GM12878 (cell line): ENCODE measurements at regions of chr1 and their contacts with region 1.

Region 1: DNA sequence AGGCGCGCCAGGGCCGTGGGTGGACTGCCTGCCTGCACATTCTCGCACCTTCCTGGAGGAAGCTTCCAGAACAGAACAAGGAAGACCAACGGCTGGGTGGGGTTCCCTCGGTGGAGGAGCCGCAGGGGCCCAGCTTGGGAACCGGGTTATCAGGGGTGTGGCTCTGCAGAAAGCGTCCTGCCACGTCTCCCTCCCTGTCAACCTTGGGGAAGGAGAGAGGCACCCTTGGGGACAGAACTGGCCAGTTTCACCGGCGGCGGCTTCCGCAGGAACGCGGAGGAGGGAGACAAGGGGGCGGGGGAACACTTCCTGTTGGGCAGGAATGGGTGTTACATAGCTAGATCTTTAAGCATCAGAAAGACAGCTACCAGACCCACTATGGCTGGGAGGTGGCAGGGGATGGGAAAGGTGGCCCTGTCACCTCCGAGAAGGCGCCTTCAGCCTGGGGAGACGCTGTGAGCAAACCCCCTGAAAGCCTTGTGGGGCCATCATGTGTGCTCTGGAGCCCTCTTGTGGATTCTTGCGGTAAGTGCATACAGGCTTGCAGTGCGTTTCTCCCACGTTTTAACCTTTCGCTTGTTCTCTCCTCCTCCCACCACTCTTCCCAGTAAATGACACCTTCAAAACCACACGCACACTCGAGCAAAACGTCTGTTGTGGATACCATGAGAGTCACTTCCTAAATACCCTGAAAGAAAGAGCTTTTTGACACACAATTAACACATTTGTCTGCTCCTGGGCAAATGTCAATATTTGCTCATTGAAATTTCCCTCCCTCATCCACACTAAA is 3.8 kb upstream of the PLEKHA6 start:
- DNase-seq: peak; percentile 52
- ATAC-seq: peak; percentile 80
- H3K4me3 ChIP-seq: peak overlapping the region; percentile 49
- H3K27ac ChIP-seq: no peak overlapping the region
- H3K4me1 ChIP-seq: peaks cover 11% of the 10 kb centered on the region
- H3K27me3 ChIP-seq: no peaks in the 10 kb centered on the region
- CTCF ChIP-seq: peak; percentile 93 to 97 (median 97); a peak in 5 of 6 replicates
- EP300 ChIP-seq: no peak
- POLR2A ChIP-seq: no peak
- RAD21 ChIP-seq: peak; percentile 88

Region 2: GRCh38 chr1:204162231-204163074 is 201.1 kb before region 1 on chr1:
- CTCF ChIA-PET with region 1: interaction called, 195 read pairs
- POLR2A ChIA-PET with region 1: no interaction called
- RAD21 ChIA-PET with region 1: interaction called, 72 read pairs
- SMC1A ChIA-PET with region 1: interaction called, 97 read pairs
- in situ Hi-C with region 1: loop called (anchors 5 kb)
- intact Hi-C with region 1: loop called (anchors 1 kb)
- DNase-seq: no peak
- ATAC-seq: peak; percentile 99
- H3K4me3 ChIP-seq: no peak overlapping the region
- H3K27ac ChIP-seq: no peak overlapping the region
- H3K4me1 ChIP-seq: no peaks in the 10 kb centered on the region
- H3K27me3 ChIP-seq: no peaks in the 10 kb centered on the region; a peak in 1 of 4 replicates
- CTCF ChIP-seq: peak; percentile 94 to 99 (median 99)
- EP300 ChIP-seq: no peak
- POLR2A ChIP-seq: no peak
- RAD21 ChIP-seq: peak; percentile 84

Region 3: GRCh38 chr1:204213668-204214662 is 149.6 kb before region 1 on chr1 and contains the start of gene GOLT1A:
- CTCF ChIA-PET with region 1: interaction called, 30 read pairs
- POLR2A ChIA-PET with region 1: no interaction called
- RAD21 ChIA-PET with region 1: interaction called, 26 read pairs
- SMC1A ChIA-PET with region 1: interaction called, 28 read pairs
- in situ Hi-C with region 1: no loop called
- intact Hi-C with region 1: loop called (anchors 5 kb)
- DNase-seq: peak; percentile 28
- ATAC-seq: peak; percentile 84
- H3K4me3 ChIP-seq: no peak within 1 kb of the TSS
- H3K27ac ChIP-seq: no peak within 1 kb of the TSS
- H3K4me1 ChIP-seq: no peaks in the 10 kb centered on the region
- H3K27me3 ChIP-seq: peaks cover 0 to 2% of the 10 kb centered on the region in 2 experiments; a peak in 1 of 4 replicates
- CTCF ChIP-seq: peak; percentile 22 to 26 (median 25); a peak in 4 of 6 replicates
- EP300 ChIP-seq: 0 out of 4 replicates have a peak, but pooled peaks of 1 of the 2 experiments have one; percentile 21
- POLR2A ChIP-seq: no peak
- RAD21 ChIP-seq: peak; percentile 25; the same call in 1 of the 2 replicates
- polyA plus RNA-seq, gene GOLT1A: 0.09 TPM in 1 of 2 experiments, not detected in the other

Region 4: GRCh38 chr1:204301186-204301936 is 62.2 kb before region 1 on chr1:
- CTCF ChIA-PET with region 1: interaction called, 16 read pairs
- POLR2A ChIA-PET with region 1: no interaction called
- RAD21 ChIA-PET with region 1: interaction called, 3 read pairs
- SMC1A ChIA-PET with region 1: no interaction called
- in situ Hi-C with region 1: no loop called
- intact Hi-C with region 1: no loop called
- DNase-seq: no peak
- ATAC-seq: no peak
- H3K4me3 ChIP-seq: no peak overlapping the region
- H3K27ac ChIP-seq: no peak overlapping the region
- H3K4me1 ChIP-seq: no peaks in the 10 kb centered on the region
- H3K27me3 ChIP-seq: peaks cover 0 to 4% of the 10 kb centered on the region in 2 experiments; a peak in 3 of 4 replicates
- CTCF ChIP-seq: no peak
- EP300 ChIP-seq: no peak
- POLR2A ChIP-seq: no peak
- RAD21 ChIP-seq: no peak

Region 5: DNA sequence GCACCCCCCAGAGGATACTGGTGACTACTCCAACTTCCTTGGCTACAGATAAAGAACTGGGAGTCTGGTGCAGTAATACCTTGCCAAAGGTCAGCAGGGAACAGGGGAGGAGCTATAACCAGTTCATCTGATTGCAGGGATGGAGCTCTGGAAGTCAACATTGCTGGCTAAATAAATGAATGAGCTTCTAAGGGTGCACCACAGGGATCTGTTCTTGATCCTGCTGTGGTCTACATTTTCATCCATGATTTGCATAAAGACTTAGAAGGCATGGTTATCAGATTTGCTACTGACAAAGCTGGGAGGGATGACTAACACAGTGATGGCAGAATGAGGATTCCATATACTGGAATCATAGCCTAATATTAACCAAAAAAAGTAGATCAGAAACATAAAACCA is 22.1 kb before region 1 on chr1:
- CTCF ChIA-PET with region 1: interaction called, 20 read pairs
- POLR2A ChIA-PET with region 1: interaction called, 4 read pairs
- RAD21 ChIA-PET with region 1: interaction called, 7 read pairs
- SMC1A ChIA-PET with region 1: interaction called, 3 read pairs
- in situ Hi-C with region 1: no loop called
- intact Hi-C with region 1: no loop called
- DNase-seq: no peak
- ATAC-seq: no peak
- H3K4me3 ChIP-seq: no peak overlapping the region
- H3K27ac ChIP-seq: no peak overlapping the region
- H3K4me1 ChIP-seq: no peaks in the 10 kb centered on the region
- H3K27me3 ChIP-seq: peaks cover 3 to 7% of the 10 kb centered on the region in 2 experiments
- CTCF ChIP-seq: no peak
- EP300 ChIP-seq: no peak
- POLR2A ChIP-seq: no peak
- RAD21 ChIP-seq: no peak

Region 6: DNA sequence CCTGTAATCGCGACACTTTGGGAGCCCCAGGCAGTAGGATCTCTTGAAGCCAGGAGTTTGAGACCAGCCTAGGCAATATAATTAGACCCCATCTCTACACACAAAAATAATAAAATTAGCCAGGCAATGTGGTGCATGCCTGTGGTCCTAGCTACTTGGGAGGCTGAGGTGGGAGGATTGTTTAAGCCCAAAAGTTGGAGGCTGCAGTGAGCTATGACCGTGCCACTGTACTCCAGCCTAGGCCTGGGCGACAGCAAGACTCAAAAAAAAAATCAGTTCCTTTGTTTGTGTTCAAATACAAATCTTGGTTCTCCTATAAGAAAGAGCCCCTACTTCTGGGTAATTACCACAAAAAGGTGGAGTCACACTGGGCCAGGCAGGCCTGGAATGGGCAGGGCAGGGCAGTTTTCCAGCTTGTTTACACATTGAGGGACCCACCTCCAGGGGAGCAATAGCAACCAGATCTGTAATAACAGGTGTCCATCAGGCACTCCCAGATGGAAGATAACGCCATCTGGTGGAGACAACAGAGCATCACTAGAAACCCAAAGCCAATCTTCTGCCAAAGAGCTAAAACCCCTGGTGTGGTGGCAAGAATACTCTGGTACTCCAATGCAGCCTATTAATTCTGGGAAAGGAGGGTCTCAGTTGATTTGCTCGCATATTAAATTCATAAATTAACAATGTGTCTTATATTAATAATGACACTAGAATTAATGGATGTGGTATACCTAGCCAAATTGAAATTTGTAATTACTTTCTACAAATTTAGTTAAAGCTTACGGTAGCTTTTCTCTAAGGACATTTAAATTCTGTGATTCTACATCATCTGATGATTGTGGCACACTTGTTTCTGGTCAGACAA is 34.9 kb after region 1 on chr1:
- CTCF ChIA-PET with region 1: interaction called, 297 read pairs
- POLR2A ChIA-PET with region 1: no interaction called
- RAD21 ChIA-PET with region 1: interaction called, 70 read pairs
- SMC1A ChIA-PET with region 1: interaction called, 141 read pairs
- in situ Hi-C with region 1: no loop called
- intact Hi-C with region 1: no loop called
- DNase-seq: no peak
- ATAC-seq: peak; percentile 94
- H3K4me3 ChIP-seq: no peak overlapping the region
- H3K27ac ChIP-seq: no peak overlapping the region
- H3K4me1 ChIP-seq: no peaks in the 10 kb centered on the region
- H3K27me3 ChIP-seq: no peaks in the 10 kb centered on the region
- CTCF ChIP-seq: peak; percentile 83 to 91 (median 86)
- EP300 ChIP-seq: no peak
- POLR2A ChIP-seq: no peak
- RAD21 ChIP-seq: peak; percentile 62

Region 7: DNA sequence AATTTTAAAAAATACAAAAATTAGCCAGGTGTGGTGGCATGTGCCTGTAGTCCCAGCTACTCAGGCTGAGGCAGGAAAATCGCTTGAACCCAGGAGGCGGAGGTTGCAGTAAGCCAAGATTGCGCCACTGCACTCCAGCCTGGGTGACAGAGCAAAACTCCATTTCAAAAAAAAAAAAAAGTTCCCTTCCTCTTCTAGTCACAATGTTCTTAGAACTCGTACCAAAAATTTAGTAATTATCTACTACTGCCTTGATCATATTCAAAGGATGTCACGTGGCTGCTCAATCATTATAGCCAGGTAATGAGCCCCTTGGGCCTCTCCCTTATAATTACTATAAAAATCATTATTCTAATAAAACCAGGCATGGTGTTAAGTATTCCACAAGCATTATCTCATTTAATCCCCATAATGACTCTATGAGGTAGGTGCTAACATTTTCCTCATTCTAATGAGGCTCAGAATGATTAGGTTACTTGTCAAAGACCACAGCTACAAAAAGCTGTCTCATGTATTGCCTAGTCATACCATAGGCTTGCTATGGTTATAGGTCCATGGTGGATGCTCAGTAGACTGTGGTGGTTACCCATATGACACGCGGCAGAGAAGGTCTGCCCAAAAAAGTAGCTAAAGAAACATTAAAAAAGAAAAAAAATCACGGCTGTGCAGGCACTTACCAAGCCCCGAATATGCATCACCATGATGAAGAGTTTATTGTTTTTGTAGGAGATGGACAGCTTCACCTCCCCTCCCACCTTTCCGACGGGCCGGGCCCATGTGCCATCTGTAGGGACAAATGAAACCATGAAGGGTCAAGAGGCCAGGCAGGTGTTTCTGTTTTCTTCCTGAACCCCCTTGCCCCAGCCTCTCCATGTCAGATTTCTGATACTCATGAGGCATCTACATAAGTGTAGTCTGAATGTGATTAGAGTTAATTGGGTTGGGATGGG is 63.7 kb after region 1 on chr1:
- CTCF ChIA-PET with region 1: no interaction called
- POLR2A ChIA-PET with region 1: no interaction called
- RAD21 ChIA-PET with region 1: no interaction called
- SMC1A ChIA-PET with region 1: no interaction called
- in situ Hi-C with region 1: no loop called
- intact Hi-C with region 1: no loop called
- DNase-seq: no peak
- ATAC-seq: no peak
- H3K4me3 ChIP-seq: no peak overlapping the region
- H3K27ac ChIP-seq: no peak overlapping the region
- H3K4me1 ChIP-seq: no peaks in the 10 kb centered on the region
- H3K27me3 ChIP-seq: no peaks in the 10 kb centered on the region
- CTCF ChIP-seq: no peak
- EP300 ChIP-seq: no peak
- POLR2A ChIP-seq: no peak
- RAD21 ChIP-seq: no peak